Activated CD8-positive, alpha-beta memory T cell treated with anti-CD3 and anti-CD28 coated beads, Interleukin-2, amount 10 ng/mL, durations not matched to agents 7 days and 5 days (primary cell): ENCODE measurements at regions of chr15 and their contacts with region 1.

Region 1: DNA sequence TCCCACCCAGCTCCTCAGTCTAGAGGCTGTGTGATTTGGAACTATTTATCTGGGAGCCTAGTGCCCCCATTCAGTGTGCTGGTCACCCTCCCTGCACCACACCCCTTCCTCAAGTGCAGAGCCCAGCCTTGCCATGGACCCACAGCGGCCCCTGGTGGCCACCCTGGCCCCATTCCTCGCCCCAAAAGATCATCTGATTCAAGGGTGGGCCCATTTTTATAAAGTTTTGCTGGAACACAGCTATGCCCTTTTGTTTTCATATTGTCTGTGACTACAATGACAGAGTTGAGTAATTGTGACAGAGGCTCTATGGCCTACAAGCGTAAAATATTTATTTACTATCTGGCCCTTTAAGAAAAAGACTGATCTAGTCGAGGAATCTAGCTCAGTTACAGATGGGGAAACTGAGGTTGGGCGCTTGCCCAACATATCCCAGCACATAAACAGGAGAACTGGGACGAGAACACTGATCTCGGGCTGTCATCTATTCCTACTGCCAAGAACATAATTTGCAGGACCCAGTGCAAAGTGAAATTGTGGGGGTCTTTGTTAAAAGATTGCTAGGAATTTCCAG is 1.8 kb downstream of the FES start:
- DNase-seq: peak; percentile 86
- ATAC-seq: peak; percentile 44
- H3K4me3 Mint-ChIP-seq: peak overlapping the region; percentile 62
- H3K27ac Mint-ChIP-seq: peak overlapping the region; percentile 73
- H3K4me1 Mint-ChIP-seq: peaks cover 71% of the 10 kb centered on the region
- H3K27me3 Mint-ChIP-seq: no peaks in the 10 kb centered on the region

Region 2: GRCh38 chr15:90571063-90571541 is 315.0 kb before region 1 on chr15:
- CTCF ChIA-PET with region 1: no interaction called
- DNase-seq: no peak
- ATAC-seq: peak; percentile 20
- H3K4me3 Mint-ChIP-seq: peak overlapping the region; percentile 28
- H3K27ac Mint-ChIP-seq: peak overlapping the region; percentile 73
- H3K4me1 Mint-ChIP-seq: peaks cover 79% of the 10 kb centered on the region
- H3K27me3 Mint-ChIP-seq: no peaks in the 10 kb centered on the region

Region 3: DNA sequence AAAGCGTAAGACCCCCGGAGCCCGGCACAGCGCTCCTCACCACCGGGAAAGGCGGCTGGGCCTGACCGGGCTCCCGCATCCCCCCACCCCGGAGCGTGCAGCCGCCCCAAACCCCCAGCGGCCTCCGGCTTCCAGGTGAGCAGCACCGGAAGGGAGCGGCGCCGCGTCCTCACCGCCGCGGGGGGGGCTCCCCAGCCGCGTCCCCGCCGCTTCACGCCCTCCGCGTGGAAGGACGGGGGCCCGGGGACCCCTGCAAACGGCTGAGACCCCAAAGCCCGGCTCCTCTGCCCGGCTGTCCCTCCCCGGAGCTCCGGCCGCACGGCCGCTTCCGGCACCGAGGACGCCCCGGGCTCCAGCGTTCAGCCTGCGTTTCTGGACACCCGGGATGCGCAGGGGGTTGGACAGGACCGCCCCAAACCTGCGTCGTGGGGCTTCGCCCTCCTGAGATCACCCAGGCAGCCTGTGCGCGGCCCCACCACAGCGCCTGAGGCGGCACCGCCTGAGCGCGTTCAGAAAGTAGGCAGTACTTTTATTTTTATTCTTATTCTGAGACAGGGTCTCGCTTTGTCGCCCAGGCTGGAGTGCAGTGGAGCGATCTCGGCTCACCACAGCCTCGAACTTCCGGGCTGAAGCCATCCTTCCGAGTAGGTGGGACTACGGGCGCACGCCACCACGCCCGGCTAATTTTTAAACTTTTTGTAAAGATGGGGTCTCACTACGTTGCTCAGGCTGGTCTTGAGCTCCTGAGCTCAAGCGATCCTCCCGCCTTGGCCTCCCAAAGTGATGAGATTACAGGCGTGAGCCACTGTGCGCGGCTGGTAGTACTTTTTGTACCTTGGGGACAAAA is 220.6 kb before region 1 on chr15:
- CTCF ChIA-PET with region 1: interaction called, 13 read pairs
- DNase-seq: peak; percentile 85
- ATAC-seq: peak; percentile 80
- H3K4me3 Mint-ChIP-seq: peak overlapping the region; percentile 84
- H3K27ac Mint-ChIP-seq: peak overlapping the region; percentile 95
- H3K4me1 Mint-ChIP-seq: peaks cover 61% of the 10 kb centered on the region
- H3K27me3 Mint-ChIP-seq: peaks cover 5% of the 10 kb centered on the region

Region 4: GRCh38 chr15:90808517-90809235 is 77.5 kb before region 1 on chr15:
- CTCF ChIA-PET with region 1: interaction called, 35 read pairs
- DNase-seq: peak; percentile 38
- ATAC-seq: no peak
- H3K4me3 Mint-ChIP-seq: peak overlapping the region; percentile 38
- H3K27ac Mint-ChIP-seq: peak overlapping the region; percentile 88
- H3K4me1 Mint-ChIP-seq: peaks cover 71% of the 10 kb centered on the region
- H3K27me3 Mint-ChIP-seq: no peaks in the 10 kb centered on the region

Region 5: GRCh38 chr15:90829942-90830440 is 56.1 kb before region 1 on chr15:
- CTCF ChIA-PET with region 1: interaction called, 12 read pairs
- DNase-seq: peak; percentile 88
- ATAC-seq: peak; percentile 85
- H3K4me3 Mint-ChIP-seq: peak overlapping the region; percentile 23
- H3K27ac Mint-ChIP-seq: peak overlapping the region; percentile 93
- H3K4me1 Mint-ChIP-seq: peaks cover 82% of the 10 kb centered on the region
- H3K27me3 Mint-ChIP-seq: no peaks in the 10 kb centered on the region

Region 6: DNA sequence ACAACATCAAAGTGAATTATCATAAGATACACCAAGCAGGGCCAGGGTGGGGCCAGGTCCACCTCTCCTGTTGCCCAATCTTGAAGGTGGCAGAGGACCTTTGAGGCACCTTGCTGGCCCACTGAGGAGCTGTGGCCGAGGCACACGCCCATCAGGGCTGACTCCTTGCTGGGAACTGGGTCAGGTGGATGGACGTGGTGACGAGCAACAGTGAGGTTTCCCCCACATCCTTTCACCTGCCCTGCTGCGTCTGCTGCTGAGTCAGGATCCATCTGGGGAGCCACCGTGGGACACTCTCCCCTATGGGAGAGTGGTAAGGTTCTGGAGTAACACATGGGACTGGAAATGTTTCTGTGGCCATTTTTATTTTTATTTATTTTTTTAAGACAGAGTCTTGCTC is 35.0 kb before region 1 on chr15:
- CTCF ChIA-PET with region 1: interaction called, 11 read pairs
- DNase-seq: peak; percentile 85
- ATAC-seq: peak; percentile 37
- H3K4me3 Mint-ChIP-seq: peak overlapping the region; percentile 60
- H3K27ac Mint-ChIP-seq: peak overlapping the region; percentile 98
- H3K4me1 Mint-ChIP-seq: peaks cover 80% of the 10 kb centered on the region
- H3K27me3 Mint-ChIP-seq: no peaks in the 10 kb centered on the region

Region 7: DNA sequence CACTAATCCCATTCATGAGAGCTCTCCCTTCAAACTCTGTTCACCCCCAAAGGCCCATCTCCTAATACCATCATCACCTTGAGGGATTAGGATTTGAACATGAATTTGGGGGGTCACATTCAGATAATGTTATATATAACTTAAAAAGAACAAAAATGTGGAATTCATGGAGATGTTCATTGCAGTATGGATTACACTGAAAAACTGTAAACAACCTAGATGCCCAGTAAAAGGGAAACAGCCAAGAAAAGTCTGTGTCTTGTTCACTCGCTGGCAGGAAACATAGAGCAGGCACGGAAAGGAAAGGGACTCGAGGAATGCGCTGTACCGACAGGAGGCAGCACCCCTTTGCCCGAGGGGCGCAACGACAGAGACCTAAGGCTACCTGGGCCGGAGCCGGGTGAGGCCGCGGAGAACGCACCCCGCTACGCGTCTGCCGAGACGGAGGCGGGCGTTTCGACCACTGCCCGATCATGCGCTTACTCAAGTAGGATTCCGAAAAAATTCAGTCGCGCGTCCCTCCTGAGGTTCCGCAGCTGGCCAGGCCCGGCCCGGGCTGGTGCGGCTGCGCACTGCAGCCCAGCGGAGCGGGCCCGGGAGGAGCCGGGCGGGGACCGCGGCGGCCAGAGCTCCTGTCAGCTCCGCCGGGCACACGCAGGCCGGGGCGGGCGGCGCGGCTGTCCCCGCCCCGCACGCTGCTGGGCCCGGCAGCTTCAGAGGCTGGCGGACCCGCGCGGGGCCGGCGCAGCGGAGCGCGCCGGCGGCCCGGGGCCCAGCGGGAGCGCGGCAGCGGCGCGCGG is 16.1 kb after region 1 on chr15:
- CTCF ChIA-PET with region 1: interaction called, 35 read pairs
- DNase-seq: peak; percentile 85
- ATAC-seq: peak; percentile 81
- H3K4me3 Mint-ChIP-seq: peak overlapping the region; percentile 87
- H3K27ac Mint-ChIP-seq: peak overlapping the region; percentile 91
- H3K4me1 Mint-ChIP-seq: peaks cover 39% of the 10 kb centered on the region
- H3K27me3 Mint-ChIP-seq: no peaks in the 10 kb centered on the region